CD8-positive, alpha-beta memory T cell (primary cell): ENCODE measurements at regions of chr17 and their contacts with region 1.

Region 1: DNA sequence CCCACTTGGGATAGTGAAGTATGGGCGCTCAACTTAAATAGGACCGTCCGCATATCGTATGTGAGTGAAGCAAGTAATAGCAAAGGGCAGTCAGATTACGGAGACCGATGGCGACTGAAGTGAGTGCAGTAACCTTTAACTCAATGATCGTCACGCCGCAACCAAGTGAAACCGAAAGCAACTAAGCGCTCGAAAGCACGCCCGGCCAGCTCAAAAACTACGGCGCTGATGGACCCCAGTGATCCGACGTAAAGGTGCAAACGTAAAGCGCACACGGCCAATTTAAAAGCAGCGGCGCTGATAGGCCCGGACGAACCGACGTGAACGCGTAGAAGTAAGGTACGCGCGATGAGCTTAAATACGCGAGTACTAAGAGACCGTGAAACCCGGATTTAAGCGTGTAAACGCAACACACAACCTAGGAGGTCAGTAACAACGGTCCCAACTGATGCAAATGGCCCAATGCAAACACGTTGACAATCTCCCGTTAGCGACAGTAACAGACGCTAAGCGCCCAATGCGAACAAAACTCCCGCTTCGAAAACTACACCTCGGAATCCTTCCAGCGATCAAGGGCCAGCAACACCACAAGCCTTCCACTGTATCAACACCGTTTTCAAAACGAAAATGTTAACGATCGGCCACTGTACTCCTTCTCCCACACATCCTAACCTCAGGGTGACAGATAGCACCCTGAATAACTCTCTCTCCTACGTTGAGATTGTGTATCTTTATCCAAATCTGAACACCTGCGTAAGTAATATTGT is 37.9 kb upstream of the ARL4D start:
- DNase-seq: peak; percentile 83 to 97 (median 90)
- H3K4me3 ChIP-seq: peak overlapping the region; percentile 76
- H3K4me3 Mint-ChIP-seq: peak overlapping the region; percentile 92 to 98 (median 95)
- H3K27ac ChIP-seq: peak overlapping the region; percentile 98
- H3K27ac Mint-ChIP-seq: peak overlapping the region; percentile 97 to 100 (median 100)
- H3K4me1 ChIP-seq: peaks cover 11% of the 10 kb centered on the region
- H3K4me1 Mint-ChIP-seq: peaks cover 9 to 38% (median 23%) of the 10 kb centered on the region in 3 donors
- H3K27me3 ChIP-seq: no peaks in the 10 kb centered on the region
- H3K27me3 Mint-ChIP-seq: peaks cover 0 to 2% of the 10 kb centered on the region in 2 donors

Region 2: DNA sequence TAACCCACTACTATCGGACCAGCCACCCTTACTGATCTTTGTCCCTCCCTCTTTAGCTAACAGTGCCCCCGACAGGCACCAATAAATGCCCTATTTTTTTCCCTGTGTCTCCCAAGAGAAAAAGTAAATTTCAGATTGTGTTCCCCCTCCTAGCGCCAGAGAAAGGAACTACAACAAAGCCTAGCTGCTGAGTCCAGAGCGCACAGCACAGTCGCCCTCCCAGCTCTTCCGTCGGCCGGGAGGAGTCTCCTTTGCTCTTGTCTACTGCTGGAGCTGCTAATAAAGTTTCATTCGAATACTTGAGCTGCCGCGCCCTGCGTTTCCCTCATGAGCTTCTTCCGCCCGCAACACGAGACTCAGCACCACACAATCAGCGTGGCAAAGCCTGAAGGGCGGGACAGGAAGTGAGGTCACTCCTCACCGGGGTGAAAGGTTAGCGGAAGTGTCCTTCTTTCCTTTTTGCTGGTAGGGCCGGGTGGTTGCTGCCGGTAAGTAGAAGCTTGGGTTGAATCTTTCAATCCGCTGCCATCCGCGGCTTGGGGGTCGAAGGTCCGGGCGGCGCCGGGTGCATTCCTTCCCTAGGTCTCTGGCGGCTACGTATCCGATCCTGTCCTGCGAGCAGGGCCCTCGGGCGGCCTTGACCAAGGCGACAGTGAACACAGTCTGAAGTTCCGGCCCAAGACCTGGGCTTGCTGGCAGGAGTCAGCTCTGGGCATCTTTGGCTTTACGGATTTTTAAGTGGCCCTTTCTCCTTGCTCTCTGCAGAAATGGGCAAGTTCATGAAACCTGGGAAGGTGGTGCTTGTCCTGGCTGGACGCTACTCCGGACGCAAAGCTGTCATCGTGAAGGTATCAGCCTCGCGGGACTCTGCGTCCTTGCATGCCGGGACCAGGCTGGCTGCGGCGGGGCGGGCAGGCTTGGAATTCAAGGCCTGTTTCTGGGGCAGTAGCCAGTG is 362.7 kb before region 1 on chr17 and contains the start of gene RPL27:
- CTCF ChIA-PET with region 1: interaction called, 3 read pairs
- POLR2A ChIA-PET with region 1: interaction called, 28 read pairs
- DNase-seq: peak; percentile 92 to 99 (median 97)
- H3K4me3 ChIP-seq: peak within 1 kb of the TSS; percentile 90
- H3K4me3 Mint-ChIP-seq: peak within 1 kb of the TSS; percentile 79 to 97 (median 96)
- H3K27ac ChIP-seq: peak within 1 kb of the TSS; percentile 94
- H3K27ac Mint-ChIP-seq: peak within 1 kb of the TSS; percentile 89 to 100 (median 99)
- H3K4me1 ChIP-seq: peaks cover 22% of the 10 kb centered on the region
- H3K4me1 Mint-ChIP-seq: peaks cover 22 to 31% (median 29%) of the 10 kb centered on the region in 3 donors
- H3K27me3 ChIP-seq: no peaks in the 10 kb centered on the region
- H3K27me3 Mint-ChIP-seq: no peaks in the 10 kb centered on the region
- total RNA-seq, gene RPL27: 1,412 to 1,428 TPM

Region 3: GRCh38 chr17:43170766-43171585 is 189.9 kb before region 1 on chr17 and contains the start of gene NBR1:
- CTCF ChIA-PET with region 1: no interaction called
- POLR2A ChIA-PET with region 1: interaction called, 15 read pairs
- DNase-seq: peak; percentile 87 to 98 (median 96)
- H3K4me3 ChIP-seq: peak within 1 kb of the TSS; percentile 90
- H3K4me3 Mint-ChIP-seq: no peak within 1 kb of the TSS
- H3K27ac ChIP-seq: peak within 1 kb of the TSS; percentile 99
- H3K27ac Mint-ChIP-seq: no peak within 1 kb of the TSS
- H3K4me1 ChIP-seq: peaks cover 43% of the 10 kb centered on the region
- H3K4me1 Mint-ChIP-seq: peaks cover 30 to 37% (median 34%) of the 10 kb centered on the region in 3 donors
- H3K27me3 ChIP-seq: no peaks in the 10 kb centered on the region
- H3K27me3 Mint-ChIP-seq: no peaks in the 10 kb centered on the region
- total RNA-seq, gene NBR1: 42.6 to 44.3 TPM

Region 4: GRCh38 chr17:43309505-43310332 is 51.2 kb before region 1 on chr17:
- CTCF ChIA-PET with region 1: interaction called, 10 read pairs
- POLR2A ChIA-PET with region 1: interaction called, 89 read pairs
- DNase-seq: no peak
- H3K4me3 ChIP-seq: no peak overlapping the region
- H3K4me3 Mint-ChIP-seq: no peak overlapping the region
- H3K27ac ChIP-seq: no peak overlapping the region
- H3K27ac Mint-ChIP-seq: no peak overlapping the region
- H3K4me1 ChIP-seq: no peaks in the 10 kb centered on the region
- H3K4me1 Mint-ChIP-seq: peaks cover 0 to 2% (median 0%) of the 10 kb centered on the region in 3 donors
- H3K27me3 ChIP-seq: no peaks in the 10 kb centered on the region
- H3K27me3 Mint-ChIP-seq: no peaks in the 10 kb centered on the region

Region 5: DNA sequence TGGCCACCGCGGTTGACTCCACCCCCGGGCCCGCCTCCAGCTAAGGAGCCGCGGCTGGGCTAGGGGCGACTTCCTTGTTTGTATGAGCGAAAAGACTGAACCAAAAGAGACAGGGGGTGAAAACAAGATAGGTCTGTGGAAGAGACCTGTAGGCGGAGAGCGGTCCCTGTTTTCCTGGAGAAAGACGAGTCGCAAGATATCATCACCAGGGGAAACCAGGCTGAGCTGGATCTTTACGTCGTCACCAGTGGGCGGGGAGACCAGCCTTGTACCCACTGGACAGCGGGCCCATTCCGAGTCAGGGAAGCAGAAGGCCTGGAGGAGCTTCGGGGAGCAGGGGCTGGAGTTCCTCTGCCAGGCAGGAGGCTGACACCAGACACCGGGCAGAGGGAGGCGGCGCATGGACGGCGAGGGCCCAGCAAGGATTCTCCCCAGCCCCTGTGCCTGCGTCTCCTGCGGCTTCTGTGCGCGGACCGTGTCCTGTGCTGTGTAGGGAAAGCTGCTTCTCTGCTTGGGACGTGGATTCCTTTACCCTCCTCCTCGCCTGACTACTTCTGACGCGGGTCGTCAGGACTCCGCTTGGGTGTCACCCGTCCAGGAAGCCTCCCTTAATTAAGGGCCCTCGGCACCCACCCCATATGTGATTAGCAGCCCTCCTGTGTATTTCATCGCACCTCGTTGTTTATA is 27.6 kb after region 1 on chr17:
- CTCF ChIA-PET with region 1: interaction called, 20 read pairs
- POLR2A ChIA-PET with region 1: interaction called, 108 read pairs
- DNase-seq: peak; percentile 83 to 95 (median 91)
- H3K4me3 ChIP-seq: peak overlapping the region; percentile 84
- H3K4me3 Mint-ChIP-seq: peak overlapping the region; percentile 90 to 99 (median 95)
- H3K27ac ChIP-seq: peak overlapping the region; percentile 94
- H3K27ac Mint-ChIP-seq: peak overlapping the region; percentile 94 to 99 (median 98)
- H3K4me1 ChIP-seq: peaks cover 18% of the 10 kb centered on the region
- H3K4me1 Mint-ChIP-seq: peaks cover 26 to 35% (median 30%) of the 10 kb centered on the region in 3 donors
- H3K27me3 ChIP-seq: no peaks in the 10 kb centered on the region
- H3K27me3 Mint-ChIP-seq: no peaks in the 10 kb centered on the region

Region 6: GRCh38 chr17:43483674-43484372 is 122.9 kb after region 1 on chr17 and contains the start of gene DHX8:
- CTCF ChIA-PET with region 1: interaction called, 15 read pairs
- POLR2A ChIA-PET with region 1: interaction called, 39 read pairs
- DNase-seq: peak; percentile 98 to 99 (median 98)
- H3K4me3 ChIP-seq: peak within 1 kb of the TSS; percentile 96
- H3K4me3 Mint-ChIP-seq: peak within 1 kb of the TSS; percentile 98 to 100 (median 100)
- H3K27ac ChIP-seq: peak within 1 kb of the TSS; percentile 88
- H3K27ac Mint-ChIP-seq: peak within 1 kb of the TSS; percentile 85 to 99 (median 98)
- H3K4me1 ChIP-seq: peaks cover 29% of the 10 kb centered on the region
- H3K4me1 Mint-ChIP-seq: peaks cover 30 to 47% (median 41%) of the 10 kb centered on the region in 3 donors
- H3K27me3 ChIP-seq: no peaks in the 10 kb centered on the region
- H3K27me3 Mint-ChIP-seq: peaks cover 0 to 1% of the 10 kb centered on the region in 2 donors
- total RNA-seq, gene DHX8: 64.8 to 70.8 TPM